H1 (cell line): ENCODE measurements at regions of chr3 and their contacts with region 1.

Region 1: GRCh38 chr3:132659365-132660051 is at the start of gene ACAD11:
- DNase-seq: peak in 1 of 2 experiments; percentile 77
- H3K4me3 ChIP-seq: peak within 1 kb of the TSS; percentile 90 to 96 (median 94)
- H3K27ac ChIP-seq: peak within 1 kb of the TSS; percentile 78
- H3K4me1 ChIP-seq: no peaks in the 10 kb centered on the region; a peak in 1 of 7 replicates
- H3K27me3 ChIP-seq: no peaks in the 10 kb centered on the region
- CTCF ChIP-seq: peak; percentile 32 to 59 (median 59); a peak in 3 of 4 replicates
- EP300 ChIP-seq: no peak
- POLR2A ChIP-seq: no peak
- RAD21 ChIP-seq: peak; percentile 41 to 45
- total RNA-seq, gene ACAD11: 10.6 and 11.0 TPM in 2 replicates

Region 2: GRCh38 chr3:132670795-132671194 is 11.3 kb after region 1 on chr3:
- CTCF ChIA-PET with region 1: interaction called, 12 read pairs
- POLR2A ChIA-PET with region 1: interaction called, 4 read pairs
- DNase-seq: no peak
- H3K4me3 ChIP-seq: no peak overlapping the region
- H3K27ac ChIP-seq: no peak overlapping the region
- H3K4me1 ChIP-seq: no peaks in the 10 kb centered on the region
- H3K27me3 ChIP-seq: no peaks in the 10 kb centered on the region
- CTCF ChIP-seq: no peak
- EP300 ChIP-seq: no peak
- POLR2A ChIP-seq: no peak
- RAD21 ChIP-seq: no peak